Activated CD8-positive, alpha-beta T cell treated with anti-CD3 and anti-CD28 coated beads, Interleukin-2, amount 10 ng/mL, durations not matched to agents 7 days and 5 days (primary cell): ENCODE measurements at regions of chr6 and their contacts with region 1.

Region 1: GRCh38 chr6:16183187-16183664 is 54.3 kb downstream of the MYLIP start:
- DNase-seq: no peak
- ATAC-seq: no peak
- H3K4me3 Mint-ChIP-seq: no peak overlapping the region
- H3K27ac Mint-ChIP-seq: no peak overlapping the region
- H3K4me1 Mint-ChIP-seq: peaks cover 36% of the 10 kb centered on the region
- H3K27me3 Mint-ChIP-seq: peaks cover 19% of the 10 kb centered on the region

Region 2: GRCh38 chr6:15691250-15691869 is 491.9 kb before region 1 on chr6:
- CTCF ChIA-PET with region 1: interaction called, 47 read pairs
- POLR2A ChIA-PET with region 1: no interaction called
- DNase-seq: peak; percentile 87
- ATAC-seq: peak; percentile 99
- H3K4me3 Mint-ChIP-seq: no peak overlapping the region
- H3K27ac Mint-ChIP-seq: no peak overlapping the region
- H3K4me1 Mint-ChIP-seq: peaks cover 9% of the 10 kb centered on the region
- H3K27me3 Mint-ChIP-seq: peaks cover 9% of the 10 kb centered on the region

Region 3: DNA sequence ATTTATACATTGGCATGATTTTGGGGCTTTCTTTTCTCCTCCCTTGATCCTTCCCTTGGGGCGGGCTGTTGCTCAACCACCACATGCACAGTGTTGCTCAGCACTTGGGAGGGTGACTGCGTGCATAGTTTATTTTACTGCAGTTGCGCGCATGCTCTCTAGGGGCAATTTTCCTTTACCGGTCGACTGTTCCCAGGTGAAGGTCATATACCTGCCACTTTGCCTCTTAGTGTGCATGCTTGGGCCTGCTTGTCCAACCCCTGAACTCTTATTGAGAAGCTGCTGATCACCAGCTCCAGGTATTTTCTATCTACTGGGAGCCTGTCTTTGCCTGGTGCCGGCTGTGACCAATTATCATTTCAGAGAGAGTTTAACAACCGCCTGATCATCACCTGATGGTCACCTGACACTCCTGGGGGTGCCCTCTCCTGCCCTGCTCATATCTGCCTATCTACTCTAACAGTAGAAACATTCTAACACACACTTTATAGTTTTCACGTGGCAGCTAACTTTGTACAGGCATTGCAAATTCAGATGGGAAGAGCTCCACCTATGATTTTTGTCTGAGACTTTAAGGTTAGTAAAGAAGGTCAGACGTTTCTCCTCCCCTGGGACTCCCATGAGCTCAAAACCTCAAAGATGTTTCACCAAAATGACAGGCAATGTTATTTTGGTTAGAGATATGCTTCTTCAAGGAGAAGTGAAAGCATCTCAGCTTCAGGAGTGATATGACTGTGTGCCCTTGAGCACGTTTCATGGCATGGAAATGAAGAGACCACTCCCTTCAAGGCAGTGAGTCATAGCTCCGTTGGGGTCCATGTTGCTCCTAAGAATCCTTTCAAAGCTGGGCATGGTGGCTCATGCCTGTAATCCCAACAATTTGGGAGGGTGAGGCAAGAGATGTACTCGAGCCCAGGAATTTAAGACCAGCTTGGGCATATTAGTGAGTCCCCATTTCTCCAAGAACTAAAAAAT is 281.8 kb before region 1 on chr6:
- CTCF ChIA-PET with region 1: interaction called, 22 read pairs
- POLR2A ChIA-PET with region 1: no interaction called
- DNase-seq: peak; percentile 29
- ATAC-seq: peak; percentile 47
- H3K4me3 Mint-ChIP-seq: no peak overlapping the region
- H3K27ac Mint-ChIP-seq: peak overlapping the region; percentile 32
- H3K4me1 Mint-ChIP-seq: peaks cover 7% of the 10 kb centered on the region
- H3K27me3 Mint-ChIP-seq: no peaks in the 10 kb centered on the region

Region 4: DNA sequence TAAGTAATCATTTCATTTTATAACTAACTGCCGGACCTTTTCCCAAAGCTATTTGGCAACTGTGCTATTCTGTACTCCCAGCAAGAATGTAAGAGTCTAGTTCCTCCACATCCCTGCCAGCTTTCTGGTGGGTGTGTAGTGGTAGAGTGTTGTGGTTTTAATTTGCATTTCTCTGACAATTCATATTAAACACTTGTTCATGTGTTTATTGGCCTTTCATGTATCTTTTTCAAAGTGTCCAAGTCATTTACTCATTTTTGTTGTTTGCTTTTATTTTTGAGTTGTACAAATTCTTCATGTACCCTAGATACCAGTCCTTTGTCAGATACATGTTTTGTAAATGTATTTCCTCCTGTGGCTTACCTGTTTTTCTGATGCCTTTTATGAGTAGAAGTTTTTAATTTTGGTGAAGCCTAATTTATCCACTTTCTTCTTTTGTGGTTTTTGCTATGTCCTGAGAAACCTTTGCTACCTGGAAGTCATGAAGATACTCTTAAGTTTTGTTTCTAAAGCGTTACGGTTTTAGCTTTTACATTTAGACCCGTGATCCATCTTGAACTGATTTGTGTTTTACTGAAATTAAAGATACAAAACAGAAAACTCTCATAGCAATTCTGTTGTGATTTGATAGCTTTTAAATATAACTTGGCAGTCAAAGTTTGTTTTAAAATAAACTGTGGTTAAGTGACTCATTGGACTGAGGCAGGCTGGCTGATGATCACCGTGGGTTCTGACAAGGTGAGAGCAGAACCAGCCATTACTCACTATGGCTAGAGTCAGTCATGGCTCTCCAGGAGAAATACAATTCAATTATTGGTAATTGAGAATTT is 46.4 kb before region 1 on chr6:
- CTCF ChIA-PET with region 1: interaction called, 77 read pairs
- POLR2A ChIA-PET with region 1: interaction called, 6 read pairs
- DNase-seq: peak; percentile 55
- ATAC-seq: peak; percentile 75
- H3K4me3 Mint-ChIP-seq: peak overlapping the region; percentile 65
- H3K27ac Mint-ChIP-seq: peak overlapping the region; percentile 86
- H3K4me1 Mint-ChIP-seq: peaks cover 66% of the 10 kb centered on the region
- H3K27me3 Mint-ChIP-seq: no peaks in the 10 kb centered on the region

Region 5: DNA sequence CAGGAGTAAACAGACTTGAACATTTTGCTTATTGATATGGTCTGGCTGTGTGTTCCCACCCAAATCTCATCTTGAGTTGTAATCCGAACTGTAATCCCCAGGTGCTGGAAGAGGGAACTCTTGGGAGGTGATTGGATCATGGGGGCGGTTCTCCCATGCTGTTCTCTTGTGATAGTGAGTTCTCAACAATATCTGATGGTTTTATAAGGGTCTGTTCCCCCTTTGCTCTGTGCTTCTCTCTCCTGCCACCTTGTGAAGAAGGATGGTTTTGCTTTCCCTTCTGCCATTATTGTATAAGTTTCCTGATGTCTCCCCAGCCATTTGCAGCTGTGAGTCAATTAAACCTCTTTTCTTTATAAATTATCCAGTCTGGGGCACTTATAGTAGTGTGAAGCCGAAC is 14.4 kb before region 1 on chr6:
- CTCF ChIA-PET with region 1: interaction called, 16 read pairs
- POLR2A ChIA-PET with region 1: interaction called, 4 read pairs
- DNase-seq: peak; percentile 39
- ATAC-seq: peak; percentile 79
- H3K4me3 Mint-ChIP-seq: no peak overlapping the region
- H3K27ac Mint-ChIP-seq: peak overlapping the region; percentile 37
- H3K4me1 Mint-ChIP-seq: peaks cover 25% of the 10 kb centered on the region
- H3K27me3 Mint-ChIP-seq: peaks cover 16% of the 10 kb centered on the region

Region 6: DNA sequence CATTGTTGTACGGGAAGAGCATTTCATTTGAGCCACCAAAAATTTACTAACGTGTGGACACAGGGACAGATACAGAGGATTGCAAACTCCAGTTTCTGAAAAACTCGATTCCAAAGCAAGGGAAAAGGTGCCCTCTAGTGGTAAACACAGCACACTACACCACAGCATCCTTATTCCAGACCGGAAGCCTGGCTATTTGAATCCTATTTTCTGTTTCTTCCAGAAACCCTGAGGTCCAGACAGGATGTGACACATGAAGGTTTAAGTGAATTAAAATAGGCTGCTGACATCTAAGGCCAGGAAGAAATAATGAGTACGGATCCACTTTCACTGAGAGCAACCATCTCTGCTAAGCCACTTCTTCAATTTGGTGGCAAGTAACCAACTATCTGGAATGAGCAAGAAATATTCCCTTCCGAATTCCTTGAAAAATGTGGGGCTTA is 23.4 kb after region 1 on chr6:
- CTCF ChIA-PET with region 1: interaction called, 43 read pairs
- POLR2A ChIA-PET with region 1: no interaction called
- DNase-seq: peak; percentile 56
- ATAC-seq: no peak
- H3K4me3 Mint-ChIP-seq: no peak overlapping the region
- H3K27ac Mint-ChIP-seq: no peak overlapping the region
- H3K4me1 Mint-ChIP-seq: peaks cover 6% of the 10 kb centered on the region
- H3K27me3 Mint-ChIP-seq: peaks cover 15% of the 10 kb centered on the region

Region 7: DNA sequence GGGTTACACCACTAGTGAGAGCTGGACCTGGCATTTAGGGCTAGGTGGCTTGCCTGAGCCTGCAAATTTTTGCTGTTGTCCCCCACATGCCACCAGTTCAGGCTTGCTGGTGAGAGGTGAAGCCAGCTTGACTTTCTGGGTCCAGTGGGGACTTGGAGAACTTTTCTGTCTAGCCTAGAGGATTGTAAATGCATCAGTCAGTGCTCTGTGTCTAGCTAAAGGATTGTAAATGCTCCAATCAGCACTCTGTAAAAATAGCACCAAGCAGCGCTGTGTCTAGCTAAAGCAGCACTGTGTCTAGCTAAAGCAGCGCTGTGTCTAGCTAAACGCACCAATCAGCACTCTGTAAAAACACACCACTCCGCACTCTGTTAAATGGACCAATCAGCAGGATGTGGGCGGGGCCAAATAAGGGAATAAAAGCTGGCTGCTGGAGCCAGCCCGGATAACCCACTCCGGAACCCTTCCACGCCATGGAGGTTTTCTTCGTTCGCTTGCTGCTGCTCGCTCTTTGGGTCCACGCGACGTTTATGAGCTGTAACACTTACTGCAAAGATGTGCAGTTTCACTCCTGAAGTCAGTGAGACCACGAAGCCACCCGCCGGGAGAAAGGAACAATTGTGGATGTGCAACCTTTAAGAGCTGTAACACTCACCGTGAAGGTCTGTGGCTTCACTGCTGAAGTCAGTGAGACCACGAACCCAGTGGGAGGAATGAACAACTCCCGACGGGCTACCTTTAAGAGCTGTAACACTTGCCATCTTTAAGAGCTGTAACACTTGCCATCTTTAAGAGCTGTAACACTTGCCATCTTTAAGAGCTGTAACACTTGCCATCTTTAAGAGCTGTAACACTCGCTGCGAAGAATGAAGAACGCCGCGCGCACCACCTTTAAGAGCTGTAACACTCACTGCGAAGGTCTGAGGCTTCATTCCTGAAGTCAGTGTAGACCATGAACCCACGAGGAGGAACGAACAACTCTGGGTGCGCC is 82.4 kb after region 1 on chr6:
- CTCF ChIA-PET with region 1: no interaction called
- POLR2A ChIA-PET with region 1: no interaction called
- DNase-seq: no peak
- ATAC-seq: no peak
- H3K4me3 Mint-ChIP-seq: no peak overlapping the region
- H3K27ac Mint-ChIP-seq: no peak overlapping the region
- H3K4me1 Mint-ChIP-seq: no peaks in the 10 kb centered on the region
- H3K27me3 Mint-ChIP-seq: no peaks in the 10 kb centered on the region